Naive thymus-derived CD4-positive, alpha-beta T cell (primary cell): ENCODE measurements at regions of chr14 and their contacts with region 1.

Region 1: GRCh38 chr14:64986578-64987571 is at the start of gene FNTB:
- DNase-seq: peak; percentile 80 to 96 (median 94)
- ATAC-seq: peak; percentile 95
- H3K4me3 ChIP-seq: peak within 1 kb of the TSS; percentile 97
- H3K4me3 Mint-ChIP-seq: peak within 1 kb of the TSS; percentile 88 to 100 (median 95)
- H3K27ac ChIP-seq: peak within 1 kb of the TSS; percentile 76
- H3K27ac Mint-ChIP-seq: peak within 1 kb of the TSS; percentile 92 to 99 (median 96)
- H3K4me1 ChIP-seq: peaks cover 14 to 38% of the 10 kb centered on the region in 2 donors
- H3K4me1 Mint-ChIP-seq: peaks cover 41 to 68% (median 60%) of the 10 kb centered on the region in 7 donors
- H3K27me3 ChIP-seq: no peaks in the 10 kb centered on the region
- H3K27me3 Mint-ChIP-seq: peaks cover 0 to 29% (median 3%) of the 10 kb centered on the region in 5 donors
- total RNA-seq, gene FNTB: 10.4 to 19.7 (median 12.9) TPM

Region 2: GRCh38 chr14:64387694-64388532 is 599.0 kb before region 1 on chr14 and contains the start of gene MTHFD1:
- CTCF ChIA-PET with region 1: no interaction called
- POLR2A ChIA-PET with region 1: no interaction called
- intact Hi-C with region 1: loop called in 1 of 2 experiments (anchors 2 kb)
- DNase-seq: peak; percentile 93 to 97 (median 96)
- ATAC-seq: peak; percentile 90
- H3K4me3 ChIP-seq: peak within 1 kb of the TSS; percentile 89
- H3K4me3 Mint-ChIP-seq: peak within 1 kb of the TSS; percentile 92 to 99 (median 96)
- H3K27ac ChIP-seq: peak within 1 kb of the TSS; percentile 79
- H3K27ac Mint-ChIP-seq: peak within 1 kb of the TSS; percentile 90 to 99 (median 95)
- H3K4me1 ChIP-seq: peaks cover 11 to 17% of the 10 kb centered on the region in 2 donors
- H3K4me1 Mint-ChIP-seq: peaks cover 18 to 49% (median 41%) of the 10 kb centered on the region in 7 donors
- H3K27me3 ChIP-seq: no peaks in the 10 kb centered on the region
- H3K27me3 Mint-ChIP-seq: peaks cover 0 to 4% (median 0%) of the 10 kb centered on the region in 5 donors
- total RNA-seq, gene MTHFD1: 28.0 to 189 (median 30.2) TPM

Region 3: DNA sequence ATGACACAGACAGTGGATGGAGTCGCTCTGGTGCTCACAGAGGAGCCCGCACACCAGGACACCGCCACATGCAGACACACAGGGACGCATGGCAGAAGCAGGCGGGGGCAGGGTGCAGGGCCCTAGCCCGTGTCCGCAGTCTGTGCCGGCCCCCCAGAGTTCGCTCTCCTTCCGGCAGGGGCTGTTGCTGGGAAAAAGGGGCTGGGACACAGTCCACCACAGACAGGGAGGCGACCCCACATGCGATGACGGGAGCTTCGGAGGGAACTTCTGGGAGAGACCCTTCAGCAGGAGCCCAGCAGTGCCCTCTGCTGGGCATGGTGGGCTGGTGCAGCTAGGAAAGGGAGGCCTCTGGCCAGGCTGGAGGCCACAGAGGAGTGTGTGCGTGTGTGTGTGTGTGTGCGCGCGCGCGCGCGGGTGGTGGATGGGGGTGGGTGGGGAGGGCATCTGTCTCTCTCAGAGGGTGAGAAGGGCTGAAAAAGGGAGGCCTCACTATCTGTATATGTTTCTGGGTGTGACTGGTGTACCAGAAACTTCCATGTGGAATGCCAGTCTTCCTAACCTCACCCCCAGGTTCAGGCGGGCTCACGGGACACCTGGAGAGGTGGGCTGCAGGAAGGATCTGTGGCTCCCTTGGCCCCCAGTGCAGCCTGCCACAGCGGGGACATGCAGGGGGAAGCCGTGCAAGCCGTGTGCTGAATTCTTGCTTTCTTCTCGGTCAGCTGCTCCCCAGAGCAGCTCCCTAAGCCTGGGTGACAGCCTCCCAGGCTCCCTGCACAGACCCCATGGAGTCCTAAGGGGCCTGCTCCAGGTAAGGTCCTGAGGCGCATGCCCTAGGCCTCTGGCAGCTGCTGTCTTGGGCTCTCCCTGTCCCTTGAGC is 222.0 kb before region 1 on chr14:
- CTCF ChIA-PET with region 1: no interaction called
- POLR2A ChIA-PET with region 1: no interaction called
- intact Hi-C with region 1: loop called in 1 of 2 experiments (anchors 2 kb)
- DNase-seq: peak; percentile 33 to 71 (median 59)
- ATAC-seq: peak; percentile 86
- H3K4me3 ChIP-seq: peak overlapping the region; percentile 39
- H3K4me3 Mint-ChIP-seq: peak overlapping the region in 9 of 10 donors; percentile 36 to 78 (median 65)
- H3K27ac ChIP-seq: no peak overlapping the region
- H3K27ac Mint-ChIP-seq: peak overlapping the region in 3 of 9 donors; percentile 48 to 62 (median 49)
- H3K4me1 ChIP-seq: peaks cover 0 to 31% of the 10 kb centered on the region in 2 donors
- H3K4me1 Mint-ChIP-seq: peaks cover 2 to 44% (median 23%) of the 10 kb centered on the region in 7 donors
- H3K27me3 ChIP-seq: no peaks in the 10 kb centered on the region
- H3K27me3 Mint-ChIP-seq: peaks cover 0 to 21% (median 0%) of the 10 kb centered on the region in 5 donors

Region 4: DNA sequence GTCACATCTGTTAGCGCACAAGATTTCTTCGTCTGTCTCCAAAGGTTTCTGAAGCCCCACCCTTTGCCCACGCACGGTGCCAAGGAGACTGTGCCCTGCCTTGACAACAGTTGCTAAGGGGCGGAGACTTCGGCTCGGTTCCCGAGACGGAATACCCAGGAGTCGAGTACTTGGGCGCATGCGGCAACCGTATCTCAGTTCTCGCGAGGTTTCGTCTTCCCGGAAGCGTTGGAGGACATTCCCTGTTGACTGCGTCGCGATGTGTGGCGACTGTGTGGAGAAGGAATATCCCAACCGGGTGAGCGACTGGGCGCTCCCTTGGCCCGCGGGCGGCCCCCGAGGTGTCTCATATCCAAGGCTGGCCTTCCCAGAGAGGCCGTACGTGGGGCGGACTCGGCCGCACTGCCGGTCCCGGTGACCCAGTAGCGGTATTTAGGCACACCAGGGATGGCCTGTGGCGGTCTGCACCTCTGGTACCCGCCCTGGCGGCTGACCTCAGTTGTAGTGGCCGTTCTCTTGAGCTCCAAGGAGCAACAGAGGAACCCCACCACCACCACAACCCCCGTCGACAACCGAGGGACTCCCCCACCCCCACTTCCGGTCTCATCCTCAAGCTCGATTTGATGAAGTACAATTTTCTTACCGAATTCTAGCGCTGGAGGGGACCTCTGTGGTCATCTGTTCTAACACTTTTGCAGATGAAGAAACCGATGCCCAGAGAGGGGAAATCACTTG is 72.5 kb before region 1 on chr14 and contains the start of gene CHURC1:
- CTCF ChIA-PET with region 1: interaction called, 6 read pairs
- POLR2A ChIA-PET with region 1: interaction called, 18 read pairs
- intact Hi-C with region 1: loop called (anchors 1 kb)
- DNase-seq: peak; percentile 83 to 99 (median 94)
- ATAC-seq: peak; percentile 98
- H3K4me3 ChIP-seq: peak within 1 kb of the TSS; percentile 96
- H3K4me3 Mint-ChIP-seq: peak within 1 kb of the TSS; percentile 87 to 97 (median 92)
- H3K27ac ChIP-seq: peak within 1 kb of the TSS; percentile 99
- H3K27ac Mint-ChIP-seq: peak within 1 kb of the TSS; percentile 93 to 99 (median 97)
- H3K4me1 ChIP-seq: peaks cover 33 to 37% of the 10 kb centered on the region in 2 donors
- H3K4me1 Mint-ChIP-seq: peaks cover 42 to 60% (median 51%) of the 10 kb centered on the region in 7 donors
- H3K27me3 ChIP-seq: no peaks in the 10 kb centered on the region
- H3K27me3 Mint-ChIP-seq: peaks cover 0 to 13% (median 0%) of the 10 kb centered on the region in 5 donors
- total RNA-seq, gene CHURC1: 71.9 to 117 (median 80.7) TPM

Region 5: DNA sequence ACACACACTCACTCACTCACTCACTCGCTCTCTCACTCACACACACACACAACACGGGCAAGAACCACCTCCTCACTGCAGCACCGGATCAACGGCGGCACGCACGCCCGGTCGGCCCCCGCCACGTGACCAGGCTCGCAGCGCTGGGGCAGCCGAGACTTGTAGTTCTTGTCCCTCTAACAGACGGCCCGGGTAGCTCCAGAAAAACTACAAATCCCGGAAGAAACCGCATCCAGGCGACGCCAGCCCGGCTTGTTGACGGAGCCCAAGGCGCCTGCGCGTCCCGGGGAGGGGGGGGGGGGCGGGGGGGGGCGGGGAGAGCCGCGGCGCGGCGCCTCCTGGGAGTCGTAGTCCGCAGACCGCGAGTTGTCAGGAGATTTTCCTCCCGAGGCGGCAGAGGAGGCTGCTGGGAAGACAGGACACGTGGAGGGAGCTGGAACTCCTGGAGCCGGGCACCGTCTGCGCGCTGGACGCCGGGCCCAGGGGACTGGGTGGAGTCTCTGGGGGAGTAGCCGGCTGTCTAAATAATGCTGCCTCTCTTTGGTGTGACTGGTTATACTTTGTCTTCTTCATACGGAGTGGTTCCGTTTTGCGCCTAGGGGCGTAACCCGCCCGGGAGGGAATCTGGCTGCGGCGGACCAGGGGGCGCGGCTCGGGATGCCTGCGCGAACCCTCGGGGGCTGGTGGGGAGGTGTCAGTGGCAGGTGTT is 115.7 kb after region 1 on chr14 and contains the start of gene MAX:
- CTCF ChIA-PET with region 1: interaction called, 3 read pairs
- POLR2A ChIA-PET with region 1: interaction called, 8 read pairs
- intact Hi-C with region 1: loop called (anchors 1 kb)
- DNase-seq: peak; percentile 88 to 100 (median 99)
- ATAC-seq: peak; percentile 95
- H3K4me3 ChIP-seq: peak within 1 kb of the TSS; percentile 96
- H3K4me3 Mint-ChIP-seq: peak within 1 kb of the TSS; percentile 87 to 97 (median 91)
- H3K27ac ChIP-seq: peak within 1 kb of the TSS; percentile 100
- H3K27ac Mint-ChIP-seq: peak within 1 kb of the TSS; percentile 91 to 99 (median 94)
- H3K4me1 ChIP-seq: peaks cover 17 to 34% of the 10 kb centered on the region in 2 donors
- H3K4me1 Mint-ChIP-seq: peaks cover 28 to 43% (median 42%) of the 10 kb centered on the region in 7 donors
- H3K27me3 ChIP-seq: no peaks in the 10 kb centered on the region
- H3K27me3 Mint-ChIP-seq: peaks cover 0 to 12% (median 0%) of the 10 kb centered on the region in 5 donors
- total RNA-seq, gene MAX: 164 to 236 (median 202) TPM

Region 6: GRCh38 chr14:65412032-65412846 is 425.4 kb after region 1 on chr14 and contains the start of gene FUT8:
- CTCF ChIA-PET with region 1: no interaction called
- POLR2A ChIA-PET with region 1: interaction called, 7 read pairs
- intact Hi-C with region 1: loop called (anchors 1 kb)
- DNase-seq: peak; percentile 90 to 97 (median 95)
- ATAC-seq: peak; percentile 93
- H3K4me3 ChIP-seq: peak within 1 kb of the TSS; percentile 92
- H3K4me3 Mint-ChIP-seq: peak within 1 kb of the TSS; percentile 85 to 99 (median 97)
- H3K27ac ChIP-seq: peak within 1 kb of the TSS; percentile 86
- H3K27ac Mint-ChIP-seq: peak within 1 kb of the TSS; percentile 93 to 99 (median 96)
- H3K4me1 ChIP-seq: peaks cover 0 to 14% of the 10 kb centered on the region in 2 donors
- H3K4me1 Mint-ChIP-seq: peaks cover 23 to 52% (median 48%) of the 10 kb centered on the region in 7 donors
- H3K27me3 ChIP-seq: no peaks in the 10 kb centered on the region
- H3K27me3 Mint-ChIP-seq: no peaks in the 10 kb centered on the region
- total RNA-seq, gene FUT8: 38.4 to 107 (median 43.4) TPM

Region 7: DNA sequence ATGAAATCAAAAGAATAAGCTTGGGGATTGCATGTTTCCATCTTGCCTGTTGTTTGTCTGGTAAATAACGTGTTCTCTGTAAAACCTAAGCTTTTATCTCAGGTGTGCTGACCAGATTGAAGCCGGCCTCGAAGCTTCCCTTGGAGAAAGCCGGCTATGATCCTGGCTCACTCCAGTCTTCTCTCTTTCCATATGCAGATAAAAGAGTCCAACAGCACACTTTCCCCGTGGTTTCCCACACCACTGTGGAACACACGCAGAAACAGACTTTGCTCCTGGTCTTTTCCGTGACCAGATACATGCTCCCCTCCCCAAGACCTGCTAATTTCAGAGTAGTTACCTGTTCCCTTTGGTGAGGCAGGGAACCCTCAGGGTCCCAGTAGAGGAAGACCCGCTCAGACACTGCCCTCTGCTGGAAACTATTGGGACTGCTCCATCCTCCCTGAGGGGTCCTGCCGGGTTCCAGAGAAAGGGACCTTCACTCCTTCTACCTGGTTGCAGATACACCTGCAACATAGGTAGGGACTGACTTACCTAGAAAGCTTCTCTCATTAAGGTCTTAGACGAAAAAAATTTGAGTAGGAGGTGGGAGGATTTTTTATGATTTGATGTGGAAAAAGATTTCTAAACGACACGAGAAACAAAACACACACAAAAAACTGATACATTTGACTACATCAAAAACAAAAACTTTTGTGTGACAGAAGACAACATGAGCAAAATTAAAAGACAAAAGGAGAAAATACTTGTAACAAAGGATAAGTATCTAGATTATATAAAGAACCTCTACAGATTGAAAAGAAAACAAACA is 1083.8 kb after region 1 on chr14:
- CTCF ChIA-PET with region 1: interaction called, 5 read pairs
- POLR2A ChIA-PET with region 1: no interaction called
- intact Hi-C with region 1: loop called in 1 of 2 experiments (anchors 1 kb)
- DNase-seq: peak; percentile 41 to 76 (median 62)
- ATAC-seq: peak; percentile 91
- H3K4me3 ChIP-seq: no peak overlapping the region
- H3K4me3 Mint-ChIP-seq: no peak overlapping the region
- H3K27ac ChIP-seq: no peak overlapping the region
- H3K27ac Mint-ChIP-seq: peak overlapping the region in 1 of 9 donors; percentile 28
- H3K4me1 ChIP-seq: no peaks in the 10 kb centered on the region
- H3K4me1 Mint-ChIP-seq: peaks cover 4 to 12% (median 8%) of the 10 kb centered on the region in 7 donors
- H3K27me3 ChIP-seq: no peaks in the 10 kb centered on the region
- H3K27me3 Mint-ChIP-seq: peaks cover 0 to 20% (median 6%) of the 10 kb centered on the region in 5 donors